ENCODE measurements at regions of chr2 and their contacts with region 1.

Region 1: DNA sequence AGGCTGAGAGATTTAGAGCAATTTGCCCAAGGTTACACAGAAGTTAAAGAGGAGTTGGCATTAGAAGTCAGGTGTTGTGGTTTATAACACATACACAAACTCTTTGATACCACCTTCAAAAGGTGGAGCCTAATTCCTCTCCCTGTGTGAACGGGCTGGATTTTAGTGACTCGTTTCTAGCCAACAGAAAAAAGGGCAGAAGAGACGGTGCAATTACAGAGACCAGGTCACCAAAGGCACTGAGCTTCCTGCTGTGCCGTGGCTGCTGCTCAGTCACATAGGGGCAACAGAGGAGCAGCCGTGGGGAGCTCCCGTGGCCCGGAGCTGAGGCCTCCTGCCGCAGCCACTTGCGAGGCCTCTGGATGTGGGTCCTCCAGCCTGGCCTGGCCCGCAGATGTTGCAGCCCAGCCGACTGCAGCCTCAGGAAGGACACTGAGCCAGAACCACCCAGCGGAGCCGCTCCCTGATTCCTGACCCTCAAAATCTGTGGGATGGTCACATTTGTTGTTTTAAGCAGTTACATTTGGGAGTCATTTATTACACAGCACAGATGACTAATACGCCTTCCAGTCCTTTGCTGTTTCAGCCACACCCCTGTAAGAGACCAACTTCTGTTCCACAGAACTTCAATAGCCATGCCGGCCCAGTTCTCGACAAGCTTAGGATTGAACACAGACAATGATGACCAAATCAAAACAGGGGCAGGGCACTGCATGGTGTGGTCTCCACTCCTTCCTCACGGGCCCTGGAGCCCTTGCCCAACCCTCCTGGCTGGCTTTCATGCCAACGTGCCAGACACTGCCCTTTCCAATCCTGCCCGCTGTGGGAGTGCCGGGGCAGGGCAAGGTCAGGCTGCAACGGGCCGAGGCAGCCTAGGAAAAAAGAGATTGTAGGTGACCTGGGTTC is 17.1 kb downstream of the EDAR start:
- DNase-seq: no peak
- CTCF ChIP-seq: no peak

Region 2: GRCh38 chr2:108855194-108855593 is 116.7 kb before region 1 on chr2:
- in situ Hi-C with region 1: loop called (anchors 25 kb)
- DNase-seq: no peak
- CTCF ChIP-seq: peak; percentile 25

Measured in GM13977 (cell line).